H1 (cell line): ENCODE measurements at regions of chr6 and their contacts with region 1.

Region 1: GRCh38 chr6:128327890-128328289 is 192.5 kb downstream of the PTPRK start:
- DNase-seq: peak in 1 of 2 experiments; percentile 50
- H3K4me3 ChIP-seq: no peak overlapping the region
- H3K27ac ChIP-seq: no peak overlapping the region
- H3K4me1 ChIP-seq: no peaks in the 10 kb centered on the region
- H3K27me3 ChIP-seq: no peaks in the 10 kb centered on the region
- CTCF ChIP-seq: peak in 2 of 3 experiments; percentile 51 to 78; a peak in 3 of 4 replicates
- EP300 ChIP-seq: no peak
- POLR2A ChIP-seq: no peak
- RAD21 ChIP-seq: peak; percentile 81 to 82

Region 2: GRCh38 chr6:128179876-128180438 is 147.9 kb before region 1 on chr6:
- CTCF ChIA-PET with region 1: no interaction called
- POLR2A ChIA-PET with region 1: no interaction called
- DNase-seq: no peak
- H3K4me3 ChIP-seq: no peak overlapping the region
- H3K27ac ChIP-seq: no peak overlapping the region
- H3K4me1 ChIP-seq: peaks cover 0 to 3% (median 0%) of the 10 kb centered on the region in 4 experiments; a peak in 2 of 7 replicates
- H3K27me3 ChIP-seq: no peaks in the 10 kb centered on the region
- CTCF ChIP-seq: no peak
- EP300 ChIP-seq: no peak
- POLR2A ChIP-seq: no peak
- RAD21 ChIP-seq: no peak

Region 3: GRCh38 chr6:128316258-128316929 is 11.5 kb before region 1 on chr6:
- CTCF ChIA-PET with region 1: interaction called, 11 read pairs
- POLR2A ChIA-PET with region 1: interaction called, 3 read pairs
- DNase-seq: no peak
- H3K4me3 ChIP-seq: no peak overlapping the region
- H3K27ac ChIP-seq: no peak overlapping the region
- H3K4me1 ChIP-seq: peaks cover 0 to 16% (median 0%) of the 10 kb centered on the region in 4 experiments; a peak in 2 of 7 replicates
- H3K27me3 ChIP-seq: no peaks in the 10 kb centered on the region
- CTCF ChIP-seq: no peak
- EP300 ChIP-seq: no peak
- POLR2A ChIP-seq: no peak
- RAD21 ChIP-seq: no peak